ENCODE measurements at regions of chr5 and their contacts with region 1.

Region 1: GRCh38 chr5:145141534-145141933 is 693.6 kb downstream of the PRELID2 start:
- DNase-seq: no peak
- ATAC-seq: no peak
- H3K4me3 ChIP-seq: no peak overlapping the region
- H3K27ac ChIP-seq: no peak overlapping the region
- H3K4me1 ChIP-seq: no peaks in the 10 kb centered on the region
- H3K27me3 ChIP-seq: no peaks in the 10 kb centered on the region
- CTCF ChIP-seq: no peak

Region 2: DNA sequence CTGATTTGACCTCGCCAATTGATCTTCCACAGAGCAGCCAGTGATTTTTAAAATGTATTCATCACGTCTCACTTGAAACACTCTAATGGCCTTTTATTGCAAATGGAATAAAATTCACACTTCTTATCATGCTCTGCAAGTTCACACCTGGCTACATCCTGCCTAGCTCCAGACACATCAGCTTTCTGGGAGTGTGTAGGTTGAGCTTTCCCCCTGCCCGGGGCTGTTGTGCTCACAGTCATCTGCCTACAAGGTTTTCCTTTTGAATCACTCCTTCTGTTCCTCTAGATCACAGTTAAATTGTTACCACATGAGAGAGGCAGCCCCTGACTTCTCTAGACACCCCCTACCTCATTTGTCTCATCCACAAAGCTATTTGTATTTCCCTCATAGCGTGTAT is 19.1 kb after region 1 on chr5:
- intact Hi-C with region 1: loop called in 1 of 2 experiments (anchors 1 kb)
- DNase-seq: no peak
- ATAC-seq: no peak
- H3K4me3 ChIP-seq: no peak overlapping the region
- H3K27ac ChIP-seq: no peak overlapping the region
- H3K4me1 ChIP-seq: no peaks in the 10 kb centered on the region
- H3K27me3 ChIP-seq: no peaks in the 10 kb centered on the region
- CTCF ChIP-seq: no peak

Region 3: DNA sequence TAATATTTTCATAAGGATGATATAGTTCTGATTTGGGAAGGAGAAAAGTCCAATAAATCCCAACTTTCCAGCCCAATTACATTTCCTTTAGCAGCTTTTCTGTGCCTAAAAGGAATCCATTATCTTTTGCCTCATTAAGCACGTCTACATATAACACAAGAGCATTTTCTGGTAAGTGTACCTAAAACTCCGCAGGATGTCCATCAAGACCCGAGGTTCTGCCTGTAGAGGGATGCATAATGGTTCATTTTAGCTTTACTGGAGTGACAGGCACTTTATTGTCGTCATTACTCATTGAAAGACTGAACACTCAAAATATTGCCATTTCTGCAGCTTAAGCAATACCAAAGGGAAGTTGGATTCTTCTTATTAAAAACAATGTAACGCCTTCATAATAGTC is 24.6 kb after region 1 on chr5:
- intact Hi-C with region 1: loop called in 1 of 2 experiments (anchors 2 kb)
- DNase-seq: no peak
- ATAC-seq: no peak
- H3K4me3 ChIP-seq: no peak overlapping the region
- H3K27ac ChIP-seq: no peak overlapping the region
- H3K4me1 ChIP-seq: no peaks in the 10 kb centered on the region
- H3K27me3 ChIP-seq: no peaks in the 10 kb centered on the region
- CTCF ChIP-seq: no peak

Region 4: GRCh38 chr5:145246961-145247744 is 105.6 kb after region 1 on chr5:
- intact Hi-C with region 1: no loop called
- DNase-seq: no peak
- ATAC-seq: no peak
- H3K4me3 ChIP-seq: no peak overlapping the region
- H3K27ac ChIP-seq: no peak overlapping the region
- H3K4me1 ChIP-seq: no peaks in the 10 kb centered on the region
- H3K27me3 ChIP-seq: no peaks in the 10 kb centered on the region
- CTCF ChIP-seq: no peak